ENCODE measurements at regions of chr19 and their contacts with region 1.

Region 1: GRCh38 chr19:18251587-18252369 is 22.5 kb downstream of the IQCN start:
- DNase-seq: peak; percentile 94
- H3K4me3 Mint-ChIP-seq: no peak overlapping the region
- H3K27ac Mint-ChIP-seq: no peak overlapping the region
- H3K4me1 Mint-ChIP-seq: peaks cover 7% of the 10 kb centered on the region
- H3K27me3 Mint-ChIP-seq: peaks cover 22% of the 10 kb centered on the region

Region 2: GRCh38 chr19:18112989-18113478 is 138.7 kb before region 1 on chr19:
- intact Hi-C with region 1: loop called (anchors 2 kb)
- DNase-seq: peak; percentile 94
- H3K4me3 Mint-ChIP-seq: no peak overlapping the region
- H3K27ac Mint-ChIP-seq: peak overlapping the region; percentile 53
- H3K4me1 Mint-ChIP-seq: peaks cover 23% of the 10 kb centered on the region
- H3K27me3 Mint-ChIP-seq: no peaks in the 10 kb centered on the region

Region 3: GRCh38 chr19:18224525-18225354 is 27.0 kb before region 1 on chr19:
- intact Hi-C with region 1: loop called (anchors 2 kb)
- DNase-seq: peak; percentile 97
- H3K4me3 Mint-ChIP-seq: peak overlapping the region; percentile 91
- H3K27ac Mint-ChIP-seq: peak overlapping the region; percentile 76
- H3K4me1 Mint-ChIP-seq: peaks cover 12% of the 10 kb centered on the region
- H3K27me3 Mint-ChIP-seq: peaks cover 51% of the 10 kb centered on the region

Measured in activated CD4-positive, alpha-beta T cell treated with anti-CD3 and anti-CD28 coated beads, Interleukin-2, amount 10 ng/mL, durations not matched to agents 24 days and 14 days (primary cell).